K562 (cell line): ENCODE measurements at regions of chr10 and their contacts with region 1.

Region 1: DNA sequence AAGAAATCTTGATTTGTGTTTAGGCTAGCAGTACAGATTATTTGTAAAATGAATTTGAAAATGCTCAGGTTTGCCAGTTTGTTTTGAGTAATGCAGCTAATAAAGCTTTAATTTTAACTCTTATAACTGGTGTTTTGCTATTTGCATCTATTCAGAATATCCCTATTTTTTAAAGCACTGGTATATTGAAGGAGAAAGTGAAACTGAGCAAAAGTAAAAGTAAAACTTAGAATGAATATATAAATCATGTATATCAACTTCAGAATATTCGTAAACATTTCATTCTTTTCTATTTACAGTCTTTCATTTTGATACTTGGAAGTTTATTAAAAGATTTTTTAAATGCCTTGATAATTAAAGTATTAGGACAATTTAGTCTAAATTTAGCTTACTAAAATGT is 26.2 kb downstream of the TASOR2 start:
- DNase-seq: no peak
- ATAC-seq: no peak
- H3K4me3 ChIP-seq: no peak overlapping the region
- H3K27ac ChIP-seq: no peak overlapping the region
- H3K4me1 ChIP-seq: 0 out of 5 replicates have a peak, but pooled peaks cover 2 to 4% of the 10 kb centered on the region in 2 experiments
- H3K27me3 ChIP-seq: no peaks in the 10 kb centered on the region
- CTCF ChIP-seq: no peak
- EP300 ChIP-seq: no peak
- POLR2A ChIP-seq: no peak
- RAD21 ChIP-seq: no peak

Region 2: GRCh38 chr10:5692461-5693358 is 18.1 kb before region 1 on chr10:
- CTCF ChIA-PET with region 1: no interaction called
- POLR2A ChIA-PET with region 1: interaction called, 10 read pairs
- in situ Hi-C with region 1: no loop called
- intact Hi-C with region 1: no loop called
- DNase-seq: peak; percentile 79 to 91 (median 80)
- ATAC-seq: peak; percentile 92
- H3K4me3 ChIP-seq: peak overlapping the region; percentile 48
- H3K27ac ChIP-seq: peak overlapping the region; percentile 86
- H3K4me1 ChIP-seq: peaks cover 26 to 32% of the 10 kb centered on the region in 2 experiments
- H3K27me3 ChIP-seq: no peaks in the 10 kb centered on the region
- CTCF ChIP-seq: no peak
- EP300 ChIP-seq: no peak
- POLR2A ChIP-seq: peak; percentile 53; the same call in 1 of the 2 replicates
- RAD21 ChIP-seq: no peak